ENCODE measurements at regions of chr7 and their contacts with region 1.

Region 1: DNA sequence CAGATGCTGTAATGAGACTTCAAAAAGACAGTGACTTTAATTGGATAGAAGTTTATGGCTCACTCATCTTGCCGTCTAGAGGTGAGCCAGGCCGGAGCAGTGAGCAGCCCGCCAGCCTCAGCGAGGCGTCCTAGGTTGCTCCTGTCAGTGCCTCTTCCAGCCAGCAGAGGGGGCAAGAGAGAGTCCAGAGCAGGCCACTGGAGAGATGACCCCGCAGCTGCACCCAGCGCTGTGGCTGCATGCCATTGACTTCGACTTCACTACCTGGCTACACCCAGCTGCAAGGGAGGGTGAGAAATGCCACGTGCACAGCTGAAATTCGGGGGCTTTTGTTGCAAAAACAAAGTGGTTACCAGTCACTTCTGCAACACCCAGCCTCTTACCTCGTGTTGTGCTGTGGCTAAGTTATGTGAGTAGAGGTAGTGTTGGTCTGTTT is 26.5 kb downstream of the NUB1 start:
- DNase-seq: peak; percentile 76 to 77
- ATAC-seq: peak; percentile 99 to 100
- H3K4me3 ChIP-seq: no peak overlapping the region
- H3K27ac ChIP-seq: peak overlapping the region in 1 of 2 experiments; percentile 32; a peak in 1 of 6 replicates
- H3K4me1 ChIP-seq: peaks cover 4% of the 10 kb centered on the region
- CTCF ChIP-seq: peak; percentile 90
- EP300 ChIP-seq: no peak
- POLR2A ChIP-seq: no peak
- RAD21 ChIP-seq: peak; percentile 85 to 89

Region 2: GRCh38 chr7:151351027-151351426 is 17.1 kb before region 1 on chr7:
- CTCF ChIA-PET with region 1: interaction called, 26 read pairs
- POLR2A ChIA-PET with region 1: interaction called, 3 read pairs
- DNase-seq: peak; percentile 32 to 35
- ATAC-seq: peak; percentile 80 to 89; a peak in 4 of 6 replicates
- H3K4me3 ChIP-seq: no peak overlapping the region
- H3K27ac ChIP-seq: no peak overlapping the region
- H3K4me1 ChIP-seq: peaks cover 26% of the 10 kb centered on the region
- CTCF ChIP-seq: peak; percentile 35
- EP300 ChIP-seq: no peak
- POLR2A ChIP-seq: no peak
- RAD21 ChIP-seq: peak in 1 of 2 experiments; percentile 30; a peak in 2 of 5 replicates

Region 3: DNA sequence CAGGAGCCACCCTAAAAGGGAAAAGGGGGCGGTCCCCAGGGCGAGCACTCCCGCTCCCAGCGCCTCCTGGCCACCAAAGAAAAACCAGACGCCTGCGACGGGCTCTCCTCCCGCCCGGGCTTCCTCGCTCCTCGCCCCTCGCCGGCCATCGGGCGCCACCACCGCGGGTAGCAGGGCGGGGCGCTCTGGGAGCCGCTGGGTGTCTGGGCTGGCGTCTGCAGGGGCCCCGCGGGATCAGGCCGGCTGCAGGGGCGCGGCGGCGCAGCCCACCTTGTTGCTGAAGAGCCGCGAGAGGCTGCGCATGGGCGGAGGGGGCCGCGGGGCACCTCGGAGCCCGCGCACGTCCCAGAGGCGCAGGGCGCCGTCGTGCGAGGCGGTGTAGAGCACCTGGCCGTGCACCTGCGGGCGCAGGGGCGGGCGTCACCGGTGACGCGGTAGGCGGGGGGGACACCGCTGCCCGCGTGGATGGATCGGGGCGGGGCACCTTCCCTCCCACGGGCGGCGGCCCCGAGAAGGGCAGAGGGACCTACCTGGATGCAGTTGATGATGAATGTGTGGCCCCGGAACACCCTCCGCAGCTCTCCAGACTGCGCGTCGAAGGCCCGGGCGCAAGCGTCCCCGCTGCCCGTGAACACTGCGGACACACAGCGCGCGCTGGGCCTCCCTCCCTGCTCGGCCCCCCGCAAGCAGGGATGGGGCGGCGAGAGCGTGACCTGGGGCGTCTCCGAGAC is 13.4 kb after region 1 on chr7:
- CTCF ChIA-PET with region 1: interaction called, 24 read pairs
- POLR2A ChIA-PET with region 1: no interaction called
- DNase-seq: no peak
- ATAC-seq: peak in 1 of 2 experiments; percentile 16; a peak in 3 of 6 replicates
- H3K4me3 ChIP-seq: peak overlapping the region; percentile 18; the same call in 2 of the 3 replicates
- H3K27ac ChIP-seq: no peak overlapping the region; a peak in 1 of 6 replicates
- H3K4me1 ChIP-seq: 0 out of 3 replicates have a peak, but pooled peaks cover 5% of the 10 kb centered on the region
- CTCF ChIP-seq: no peak
- EP300 ChIP-seq: no peak
- POLR2A ChIP-seq: no peak
- RAD21 ChIP-seq: no peak

Region 4: GRCh38 chr7:151400626-151401315 is 32.6 kb after region 1 on chr7:
- CTCF ChIA-PET with region 1: interaction called, 12 read pairs
- POLR2A ChIA-PET with region 1: no interaction called
- DNase-seq: no peak
- ATAC-seq: no peak
- H3K4me3 ChIP-seq: no peak overlapping the region
- H3K27ac ChIP-seq: no peak overlapping the region; a peak in 1 of 6 replicates
- H3K4me1 ChIP-seq: peaks cover 20% of the 10 kb centered on the region
- CTCF ChIP-seq: no peak
- EP300 ChIP-seq: no peak
- POLR2A ChIP-seq: no peak
- RAD21 ChIP-seq: no peak

Region 5: DNA sequence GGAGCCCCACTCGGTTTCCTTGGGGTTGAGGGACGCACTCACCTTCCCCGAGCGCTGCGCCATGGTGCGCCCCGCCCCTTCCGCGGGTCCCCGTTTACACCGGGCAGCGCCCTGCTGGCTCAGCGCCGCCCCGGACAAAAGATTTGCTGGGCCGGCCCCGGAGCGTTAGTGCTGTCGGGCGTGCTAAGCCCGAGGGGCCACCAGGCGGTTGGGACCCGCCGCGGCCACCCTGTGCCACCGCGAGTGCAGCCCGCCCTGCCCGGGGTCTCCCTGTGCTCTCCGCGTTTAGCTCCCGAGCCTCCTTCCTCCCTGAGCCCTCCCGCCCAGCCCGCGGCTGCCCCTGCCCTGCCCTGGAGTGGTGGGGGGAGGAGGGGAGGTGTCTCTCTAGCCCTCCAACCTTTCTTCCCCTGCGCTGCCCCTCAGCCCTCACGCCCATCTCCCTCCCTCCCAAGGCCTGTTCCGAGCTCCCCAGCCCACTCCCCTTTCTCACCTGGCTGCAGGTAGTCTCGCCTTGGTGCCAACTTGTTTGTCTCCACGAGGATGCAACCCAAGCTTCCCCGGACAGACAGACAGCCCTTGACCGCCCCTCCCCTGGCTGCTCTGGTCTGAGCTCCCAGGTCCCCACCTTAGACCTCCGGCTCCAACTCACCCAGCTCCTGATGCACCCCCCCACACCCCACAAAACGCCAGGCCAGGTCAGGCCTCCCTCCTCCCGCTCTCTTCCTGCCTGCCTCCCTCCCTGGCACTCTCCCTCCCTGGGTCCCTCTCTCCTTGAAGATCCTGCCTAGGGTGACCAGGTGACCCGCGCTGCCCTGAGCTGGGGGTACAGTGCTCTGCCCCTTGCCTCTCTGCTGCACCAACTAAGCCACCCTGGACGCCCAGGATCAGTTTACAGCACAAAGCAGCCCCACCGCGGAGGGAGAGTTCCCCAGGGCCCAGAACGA is 72.0 kb after region 1 on chr7 and contains the start of gene CRYGN:
- CTCF ChIA-PET with region 1: interaction called, 438 read pairs
- POLR2A ChIA-PET with region 1: no interaction called
- DNase-seq: no peak
- ATAC-seq: peak in 1 of 2 experiments; percentile 16; a peak in 1 of 6 replicates
- H3K4me3 ChIP-seq: no peak within 1 kb of the TSS
- H3K27ac ChIP-seq: peak within 1 kb of the TSS in 1 of 2 experiments; percentile 58; a peak in 3 of 6 replicates
- H3K4me1 ChIP-seq: peaks cover 8% of the 10 kb centered on the region; the same call in 1 of the 3 replicates
- CTCF ChIP-seq: no peak
- EP300 ChIP-seq: no peak
- POLR2A ChIP-seq: no peak
- RAD21 ChIP-seq: no peak
- polyA plus RNA-seq, gene CRYGN: not detected in 2 replicates